Thyroid gland (tissue), 4 donors: ENCODE measurements at regions of chr11 and their contacts with region 1.

Region 1: DNA sequence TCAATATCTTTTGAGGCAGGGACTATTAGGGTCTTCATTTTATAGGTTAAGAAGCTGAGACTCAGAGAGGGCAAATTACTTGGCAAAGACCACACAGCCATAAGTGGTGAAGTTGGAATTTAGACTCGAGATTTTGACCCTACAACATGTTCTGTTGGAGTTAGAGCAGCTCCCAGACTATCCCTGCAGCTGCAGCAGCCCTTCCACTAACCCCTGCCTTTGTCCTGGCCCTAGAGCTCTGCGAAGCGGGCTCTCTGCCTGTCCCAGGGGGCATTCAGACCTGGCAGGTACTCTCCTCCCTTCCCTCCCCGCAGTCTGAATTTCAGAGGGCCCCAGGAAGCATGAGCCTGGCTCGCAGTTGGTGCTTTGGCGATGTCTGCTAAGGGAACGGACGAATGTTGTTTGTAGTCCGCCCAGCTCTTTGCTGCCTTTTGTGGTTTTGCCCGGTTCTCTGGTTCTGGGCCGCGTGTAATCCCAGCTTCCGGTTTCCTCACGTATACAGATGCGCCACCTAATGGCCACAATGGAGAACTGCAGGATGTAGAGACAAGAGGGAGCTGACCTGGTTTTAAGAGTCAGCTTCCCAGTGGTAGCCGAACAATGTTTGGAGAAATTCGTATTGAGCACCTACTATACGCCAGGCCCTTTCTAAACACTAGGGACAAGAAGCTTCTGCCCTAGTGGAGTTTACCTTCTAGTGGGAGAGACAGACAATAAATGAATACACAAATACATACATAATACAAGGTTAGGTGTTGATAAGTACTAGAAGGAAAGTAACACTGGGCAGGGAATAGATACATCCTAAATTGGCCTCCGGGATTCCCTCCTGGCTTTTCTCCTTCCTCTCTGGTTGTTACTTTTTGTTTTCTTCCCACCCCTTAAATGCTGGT is 125.2 kb downstream of the ST3GAL4 start:
- DNase-seq: peak; percentile 77 to 79
- H3K4me3 ChIP-seq: no peak overlapping the region
- H3K27ac ChIP-seq: peak overlapping the region in 1 of 3 donors; percentile 5
- H3K4me1 ChIP-seq: peaks cover 0 to 10% of the 10 kb centered on the region in 2 donors
- H3K27me3 ChIP-seq: no peaks in the 10 kb centered on the region
- CTCF ChIP-seq: peak; percentile 84 to 96 (median 89)
- POLR2A ChIP-seq: no peak

Region 2: DNA sequence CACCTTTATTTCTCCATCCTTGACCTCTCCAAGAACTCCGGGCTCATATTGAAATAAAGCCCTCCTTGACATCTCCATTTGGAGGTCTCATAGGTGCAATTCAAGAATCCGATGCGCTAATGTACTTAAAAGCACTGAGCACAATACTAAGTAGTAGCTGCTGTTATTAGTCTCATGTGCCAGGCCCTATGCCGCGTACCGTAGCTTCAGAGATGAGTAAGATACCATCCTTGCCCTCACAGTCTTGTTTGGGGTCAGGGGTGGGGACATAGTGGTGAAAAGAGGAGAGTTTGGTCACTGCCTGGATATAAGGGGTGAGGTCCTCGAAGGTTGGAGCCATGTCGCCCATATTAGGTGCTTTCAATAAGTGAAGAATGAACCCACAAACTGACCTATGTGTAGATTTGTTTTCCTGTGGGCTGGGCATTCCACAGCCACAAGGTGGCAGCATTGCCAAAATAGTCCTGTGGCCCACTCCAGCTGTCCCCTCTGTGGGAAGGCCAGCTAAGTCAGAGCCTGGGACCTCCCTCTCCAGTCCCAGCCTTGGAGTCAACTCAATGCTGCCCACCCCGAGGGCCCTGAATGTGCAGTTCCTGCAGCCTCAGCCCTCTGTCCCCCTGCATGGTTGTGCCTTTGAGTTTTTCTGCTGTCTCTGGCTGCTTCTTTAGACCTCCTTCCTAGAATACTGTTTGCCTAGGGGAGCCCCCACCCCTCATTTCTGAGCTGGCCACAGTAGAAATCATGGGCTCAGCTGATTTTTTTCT is 170.2 kb before region 1 on chr11:
- intact Hi-C with region 1: loop called (anchors 5 kb)
- DNase-seq: peak; percentile 67 to 71
- H3K4me3 ChIP-seq: no peak overlapping the region
- H3K27ac ChIP-seq: no peak overlapping the region
- H3K4me1 ChIP-seq: peaks cover 0 to 3% of the 10 kb centered on the region in 2 donors
- H3K27me3 ChIP-seq: no peaks in the 10 kb centered on the region
- CTCF ChIP-seq: peak; percentile 70 to 84 (median 80)
- POLR2A ChIP-seq: no peak